HCT116 (cell line): ENCODE measurements at regions of chr5 and their contacts with region 1.

Region 1: DNA sequence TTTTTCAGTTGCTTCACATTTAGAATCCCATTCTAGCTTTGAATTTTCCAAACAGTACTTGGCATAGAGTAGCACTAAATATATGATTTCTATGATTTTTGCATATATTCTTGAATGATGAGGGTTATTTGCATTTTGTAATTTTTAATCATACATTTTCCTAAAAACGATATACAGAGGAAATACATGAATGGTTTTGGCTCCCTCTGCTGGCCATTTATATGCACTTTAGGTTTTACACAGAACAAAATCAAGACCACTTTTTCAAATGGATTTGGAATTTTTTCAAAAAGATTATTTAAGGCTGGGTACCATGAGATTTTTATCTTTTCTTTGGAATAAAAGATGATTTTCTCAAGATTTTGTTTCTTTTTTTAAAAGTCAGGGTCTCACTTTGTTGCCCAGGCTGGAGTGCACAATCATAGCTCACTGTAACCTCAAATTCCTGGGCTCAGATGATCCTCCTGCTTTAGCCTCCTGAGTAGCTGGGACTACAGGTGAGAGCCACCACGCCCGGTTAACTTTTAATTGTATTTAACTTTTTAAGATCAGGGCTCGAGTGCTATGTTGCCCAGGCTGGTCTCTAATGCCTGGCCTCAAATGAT is 16.7 kb upstream of the COMMD10 start:
- DNase-seq: peak; percentile 78
- ATAC-seq: peak; percentile 76
- H3K4me3 ChIP-seq: no peak overlapping the region
- H3K27ac ChIP-seq: no peak overlapping the region; the same call in 1 of the 2 replicates
- H3K4me1 ChIP-seq: peaks cover 4 to 31% of the 10 kb centered on the region in 2 experiments; a peak in 3 of 4 replicates
- H3K27me3 ChIP-seq: no peaks in the 10 kb centered on the region
- CTCF ChIP-seq: peak; percentile 79 to 99 (median 83)
- POLR2A ChIP-seq: no peak
- RAD21 ChIP-seq: peak; percentile 98

Region 2: GRCh38 chr5:115624994-115625393 is 443.1 kb before region 1 on chr5:
- CTCF ChIA-PET with region 1: no interaction called
- POLR2A ChIA-PET with region 1: no interaction called
- RAD21 ChIA-PET with region 1: no interaction called
- intact Hi-C with region 1: no loop called
- DNase-seq: no peak
- ATAC-seq: no peak
- H3K4me3 ChIP-seq: peak overlapping the region; percentile 92 to 94
- H3K27ac ChIP-seq: peak overlapping the region; percentile 84; the same call in 1 of the 2 replicates
- H3K4me1 ChIP-seq: peaks cover 6 to 26% of the 10 kb centered on the region in 2 experiments
- H3K27me3 ChIP-seq: no peaks in the 10 kb centered on the region
- CTCF ChIP-seq: no peak
- POLR2A ChIP-seq: no peak
- RAD21 ChIP-seq: no peak

Region 3: GRCh38 chr5:115847290-115847689 is 220.8 kb before region 1 on chr5:
- CTCF ChIA-PET with region 1: no interaction called
- POLR2A ChIA-PET with region 1: interaction called, 5 read pairs
- RAD21 ChIA-PET with region 1: no interaction called
- intact Hi-C with region 1: loop called (anchors 5 kb)
- DNase-seq: peak; percentile 80
- ATAC-seq: peak; percentile 71
- H3K4me3 ChIP-seq: peak overlapping the region; percentile 25 to 44; a peak in 3 of 4 replicates
- H3K27ac ChIP-seq: peak overlapping the region; percentile 96
- H3K4me1 ChIP-seq: peaks cover 73 to 94% of the 10 kb centered on the region in 2 experiments
- H3K27me3 ChIP-seq: no peaks in the 10 kb centered on the region
- CTCF ChIP-seq: no peak
- POLR2A ChIP-seq: no peak
- RAD21 ChIP-seq: no peak

Region 4: DNA sequence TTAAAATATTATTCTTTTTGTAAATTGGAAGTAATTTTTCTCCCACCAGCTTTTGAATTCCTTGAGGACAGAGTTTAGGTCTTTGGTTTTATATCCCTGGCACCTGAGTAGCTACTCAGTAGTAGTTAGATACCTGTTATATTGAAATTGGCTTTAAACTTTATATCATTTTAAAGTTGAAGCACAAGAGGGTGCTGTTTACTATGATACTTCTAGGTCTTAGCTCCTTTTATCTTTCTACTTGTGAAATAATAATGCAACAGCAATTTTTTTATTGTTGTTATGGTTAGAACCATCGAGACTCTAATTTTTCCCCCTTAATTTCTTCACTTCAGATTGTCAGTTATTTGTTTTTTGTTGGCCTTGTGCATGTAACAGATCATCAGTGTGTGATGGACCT is 180.1 kb before region 1 on chr5:
- CTCF ChIA-PET with region 1: interaction called, 36 read pairs
- POLR2A ChIA-PET with region 1: no interaction called
- RAD21 ChIA-PET with region 1: interaction called in 1 of 2 experiments, 5 read pairs
- intact Hi-C with region 1: loop called (anchors 1 kb)
- DNase-seq: peak; percentile 27
- ATAC-seq: 0 out of 2 replicates have a peak, but pooled peaks have one; percentile 45
- H3K4me3 ChIP-seq: no peak overlapping the region
- H3K27ac ChIP-seq: no peak overlapping the region
- H3K4me1 ChIP-seq: peaks cover 8 to 47% of the 10 kb centered on the region in 2 experiments; a peak in 3 of 4 replicates
- H3K27me3 ChIP-seq: no peaks in the 10 kb centered on the region
- CTCF ChIP-seq: peak in 2 of 3 experiments; percentile 44 to 50; a peak in 3 of 6 replicates
- POLR2A ChIP-seq: no peak
- RAD21 ChIP-seq: peak; percentile 74

Region 5: DNA sequence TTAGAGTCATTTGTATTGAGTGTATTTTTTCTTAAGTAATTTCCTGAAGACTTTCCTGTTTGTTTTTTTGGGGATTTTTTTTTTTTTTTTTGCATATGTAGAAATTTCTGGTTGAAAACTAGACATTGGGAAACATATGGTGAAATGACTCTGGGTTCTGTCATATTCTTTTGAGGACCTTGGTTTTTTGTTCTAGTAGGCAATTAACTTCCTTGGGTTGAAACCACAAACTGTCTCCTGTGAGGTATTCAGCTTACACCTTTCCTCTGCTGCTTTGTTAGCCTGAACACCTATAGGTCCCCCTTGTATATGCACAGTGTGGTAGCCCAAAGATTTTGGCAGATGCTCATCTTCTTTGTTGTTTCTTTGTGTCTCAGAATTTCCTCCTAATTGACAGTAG is 157.2 kb after region 1 on chr5:
- CTCF ChIA-PET with region 1: no interaction called
- POLR2A ChIA-PET with region 1: no interaction called
- RAD21 ChIA-PET with region 1: no interaction called
- intact Hi-C with region 1: no loop called
- DNase-seq: no peak
- ATAC-seq: no peak
- H3K4me3 ChIP-seq: no peak overlapping the region
- H3K27ac ChIP-seq: no peak overlapping the region
- H3K4me1 ChIP-seq: no peaks in the 10 kb centered on the region
- H3K27me3 ChIP-seq: no peaks in the 10 kb centered on the region
- CTCF ChIP-seq: no peak
- POLR2A ChIP-seq: no peak
- RAD21 ChIP-seq: no peak